ENCODE measurements at regions of chr7 and their contacts with region 1.

Region 1: GRCh38 chr7:148747275-148747674 is 48.6 kb downstream of the CUL1 start:
- DNase-seq: no peak
- H3K4me3 Mint-ChIP-seq: no peak overlapping the region
- H3K27ac Mint-ChIP-seq: no peak overlapping the region
- H3K4me1 Mint-ChIP-seq: peaks cover 10% of the 10 kb centered on the region
- H3K27me3 Mint-ChIP-seq: no peaks in the 10 kb centered on the region

Region 2: DNA sequence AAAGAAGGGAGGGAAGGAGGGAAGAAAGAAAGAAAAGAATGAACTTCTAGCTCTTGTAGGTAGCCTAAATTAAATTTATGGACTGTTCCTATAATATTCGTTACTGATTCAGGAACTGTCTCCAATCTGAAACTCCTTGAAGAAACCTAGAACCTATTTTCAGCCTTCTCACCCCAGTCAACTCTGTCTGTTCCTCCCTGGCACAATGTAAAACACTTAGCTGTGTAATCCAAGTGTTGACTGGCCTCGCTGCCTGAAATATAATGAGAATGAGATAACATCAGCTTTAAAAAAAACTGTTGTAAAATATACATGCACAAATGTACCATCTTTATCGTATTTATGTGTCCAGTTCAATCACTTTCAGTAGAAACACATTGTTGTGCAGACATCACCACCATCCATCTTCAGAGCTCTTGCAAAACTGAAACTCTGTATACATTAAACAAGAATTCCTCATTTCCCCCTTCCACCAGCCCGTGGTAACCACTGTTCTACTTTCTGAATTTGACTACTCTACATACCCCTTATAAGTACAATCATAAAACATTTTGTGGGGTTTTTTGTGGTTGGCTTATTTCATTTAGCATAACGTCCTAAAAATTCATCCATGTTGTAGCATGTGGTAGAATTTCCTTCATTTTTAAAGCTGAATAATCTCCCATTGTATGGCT is 163.0 kb before region 1 on chr7:
- intact Hi-C with region 1: no loop called
- DNase-seq: no peak
- H3K4me3 Mint-ChIP-seq: peak overlapping the region; percentile 20
- H3K27ac Mint-ChIP-seq: peak overlapping the region; percentile 12
- H3K4me1 Mint-ChIP-seq: peaks cover 18% of the 10 kb centered on the region
- H3K27me3 Mint-ChIP-seq: peaks cover 11% of the 10 kb centered on the region

Region 3: GRCh38 chr7:148712678-148713329 is 34.5 kb before region 1 on chr7:
- intact Hi-C with region 1: loop called (anchors 5 kb)
- DNase-seq: no peak
- H3K4me3 Mint-ChIP-seq: no peak overlapping the region
- H3K27ac Mint-ChIP-seq: no peak overlapping the region
- H3K4me1 Mint-ChIP-seq: peaks cover 42% of the 10 kb centered on the region
- H3K27me3 Mint-ChIP-seq: no peaks in the 10 kb centered on the region

Region 4: DNA sequence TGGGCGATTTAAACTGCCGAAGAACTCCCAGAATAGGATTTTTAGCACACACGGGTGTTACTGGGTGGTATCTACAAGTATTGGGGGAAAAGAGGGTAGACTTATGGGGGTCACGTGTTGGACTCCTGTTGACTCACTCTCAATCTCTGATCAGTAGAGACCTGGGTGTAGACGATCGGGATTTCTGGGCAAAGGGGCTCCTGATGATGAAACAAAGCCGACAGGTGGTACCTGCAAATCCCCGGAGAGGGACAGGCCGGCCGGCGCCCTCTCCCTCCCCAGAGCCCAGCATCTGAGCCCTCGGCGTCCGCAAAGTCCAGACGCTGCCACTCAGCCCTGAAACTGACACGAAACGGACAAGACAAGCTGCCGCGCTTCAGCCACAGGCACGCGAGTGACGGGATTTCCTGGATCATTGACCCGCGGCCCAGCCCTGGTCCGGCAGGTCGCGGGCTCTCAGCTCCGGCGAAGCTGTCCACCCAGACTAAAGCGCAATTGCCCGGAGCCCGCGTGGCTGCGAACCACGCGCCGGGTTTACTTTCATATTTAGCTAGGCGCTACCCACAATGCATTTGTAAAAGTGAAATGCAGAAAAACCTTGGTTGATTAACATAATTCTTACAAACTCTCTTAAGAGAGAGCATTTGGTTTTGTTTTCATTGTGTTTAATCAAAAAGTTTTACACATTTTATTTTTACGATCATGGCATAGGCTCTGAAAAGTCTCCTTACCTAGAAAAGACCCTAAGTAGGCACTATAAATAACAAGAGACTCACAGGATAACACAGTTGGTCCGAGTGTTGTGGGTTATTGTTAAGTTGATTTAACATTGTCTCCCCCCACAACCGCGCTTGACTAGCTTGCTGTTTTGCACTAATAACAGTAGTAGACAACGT is 193.7 kb after region 1 on chr7:
- intact Hi-C with region 1: no loop called
- DNase-seq: peak; percentile 92
- H3K4me3 Mint-ChIP-seq: peak overlapping the region; percentile 97
- H3K27ac Mint-ChIP-seq: peak overlapping the region; percentile 99
- H3K4me1 Mint-ChIP-seq: peaks cover 17% of the 10 kb centered on the region
- H3K27me3 Mint-ChIP-seq: no peaks in the 10 kb centered on the region

Measured in activated CD4-positive, alpha-beta T cell treated with anti-CD3 and anti-CD28 coated beads, Interleukin-2, amount 10 ng/mL, durations not matched to agents 24 days and 14 days (primary cell).